ENCODE measurements at regions of chr17 and their contacts with region 1.

Region 1: GRCh38 chr17:40098846-40099618 is 1.4 kb downstream of the NR1D1 start:
- DNase-seq: peak; percentile 100
- H3K4me3 Mint-ChIP-seq: peak overlapping the region; percentile 95
- H3K27ac Mint-ChIP-seq: peak overlapping the region; percentile 94
- H3K4me1 Mint-ChIP-seq: peaks cover 31% of the 10 kb centered on the region
- H3K27me3 Mint-ChIP-seq: no peaks in the 10 kb centered on the region
- CTCF ChIP-seq: no peak

Region 2: DNA sequence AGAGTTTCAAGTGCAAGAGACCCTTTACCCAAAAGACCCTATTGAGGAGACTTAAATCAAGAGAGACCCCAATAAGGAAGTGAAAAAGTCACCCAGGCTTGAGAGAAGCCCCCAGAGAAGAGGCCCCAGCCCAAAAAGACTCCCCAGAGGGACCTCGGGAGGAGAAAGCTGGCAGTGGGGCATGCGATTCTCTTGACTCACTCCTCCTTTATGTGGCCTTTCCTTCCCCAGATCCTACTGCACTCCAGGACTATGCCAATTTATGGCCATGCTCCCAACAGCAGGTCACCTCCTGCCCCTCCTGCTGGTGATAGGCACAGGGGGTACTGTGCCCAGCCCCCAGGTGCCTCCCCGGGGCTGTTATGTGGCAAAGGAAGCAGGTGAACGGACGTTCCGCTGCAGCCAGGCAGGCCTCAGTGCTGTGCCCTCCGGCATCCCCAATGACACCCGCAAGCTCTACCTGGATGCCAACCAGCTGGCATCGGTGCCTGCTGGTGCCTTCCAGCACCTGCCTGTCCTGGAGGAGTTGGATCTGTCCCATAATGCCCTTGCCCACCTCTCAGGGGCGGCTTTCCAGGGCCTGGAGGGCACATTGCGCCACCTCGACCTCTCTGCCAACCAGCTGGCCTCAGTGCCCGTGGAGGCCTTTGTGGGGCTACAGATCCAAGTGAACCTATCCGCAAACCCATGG is 155.2 kb before region 1 on chr17:
- CTCF ChIA-PET with region 1: no interaction called
- POLR2A ChIA-PET with region 1: no interaction called
- intact Hi-C with region 1: no loop called
- DNase-seq: no peak
- H3K4me3 Mint-ChIP-seq: no peak overlapping the region
- H3K27ac Mint-ChIP-seq: no peak overlapping the region
- H3K4me1 Mint-ChIP-seq: no peaks in the 10 kb centered on the region
- H3K27me3 Mint-ChIP-seq: peaks cover 23% of the 10 kb centered on the region
- CTCF ChIP-seq: no peak

Region 3: DNA sequence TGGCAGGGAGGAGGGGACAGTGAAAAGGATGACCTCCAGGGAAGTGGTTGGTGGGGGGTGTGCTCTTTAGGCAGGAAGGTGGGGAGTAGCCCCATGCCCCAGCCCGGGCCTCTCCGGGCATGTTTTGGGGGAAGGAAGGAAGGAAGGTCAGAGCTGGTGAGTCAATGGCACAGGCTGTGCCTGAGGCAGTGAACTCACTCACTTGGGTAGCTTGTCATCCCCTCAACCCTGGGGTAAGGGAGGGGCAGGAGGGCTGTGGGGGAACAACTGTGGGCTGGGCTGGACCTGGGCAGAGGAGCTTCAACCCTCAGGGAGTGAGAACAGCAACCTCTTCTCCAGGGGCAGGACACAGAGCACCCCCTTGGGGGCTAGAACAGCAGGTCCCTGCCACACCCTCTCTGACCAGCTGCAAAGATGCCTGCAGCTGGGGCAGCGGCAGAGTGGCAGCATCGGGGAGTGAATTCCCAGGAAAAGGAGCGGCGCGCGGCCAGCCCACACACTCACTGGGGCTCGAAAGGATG is 77.5 kb before region 1 on chr17:
- CTCF ChIA-PET with region 1: interaction called, 3 read pairs
- POLR2A ChIA-PET with region 1: interaction called, 79 read pairs
- intact Hi-C with region 1: no loop called
- DNase-seq: peak; percentile 99
- H3K4me3 Mint-ChIP-seq: peak overlapping the region; percentile 47
- H3K27ac Mint-ChIP-seq: peak overlapping the region; percentile 96
- H3K4me1 Mint-ChIP-seq: peaks cover 74% of the 10 kb centered on the region
- H3K27me3 Mint-ChIP-seq: no peaks in the 10 kb centered on the region
- CTCF ChIP-seq: no peak

Region 4: GRCh38 chr17:40062329-40063186 is 36.5 kb before region 1 on chr17 and contains the start of gene THRA:
- CTCF ChIA-PET with region 1: interaction called, 18 read pairs
- POLR2A ChIA-PET with region 1: interaction called, 99 read pairs
- intact Hi-C with region 1: no loop called
- DNase-seq: peak; percentile 46
- H3K4me3 Mint-ChIP-seq: peak within 1 kb of the TSS; percentile 89
- H3K27ac Mint-ChIP-seq: peak within 1 kb of the TSS; percentile 39
- H3K4me1 Mint-ChIP-seq: peaks cover 33% of the 10 kb centered on the region
- H3K27me3 Mint-ChIP-seq: no peaks in the 10 kb centered on the region
- CTCF ChIP-seq: peak; percentile 22
- total RNA-seq, gene THRA: 5.5 and 6.4 TPM in 2 replicates

Region 5: GRCh38 chr17:40121181-40122135 is 22.4 kb after region 1 on chr17 and contains the start of gene MSL1:
- CTCF ChIA-PET with region 1: interaction called, 4 read pairs
- POLR2A ChIA-PET with region 1: interaction called, 340 read pairs
- intact Hi-C with region 1: no loop called
- DNase-seq: peak; percentile 81
- H3K4me3 Mint-ChIP-seq: peak within 1 kb of the TSS; percentile 99
- H3K27ac Mint-ChIP-seq: peak within 1 kb of the TSS; percentile 82
- H3K4me1 Mint-ChIP-seq: peaks cover 20% of the 10 kb centered on the region
- H3K27me3 Mint-ChIP-seq: no peaks in the 10 kb centered on the region
- CTCF ChIP-seq: no peak
- total RNA-seq, gene MSL1: 59.8 and 62.2 TPM in 2 replicates

Region 6: GRCh38 chr17:40177275-40177874 is 78.3 kb after region 1 on chr17 and contains the start of gene RAPGEFL1:
- CTCF ChIA-PET with region 1: interaction called, 4 read pairs
- POLR2A ChIA-PET with region 1: interaction called, 28 read pairs
- intact Hi-C with region 1: no loop called
- DNase-seq: peak; percentile 69
- H3K4me3 Mint-ChIP-seq: peak within 1 kb of the TSS; percentile 59
- H3K27ac Mint-ChIP-seq: peak within 1 kb of the TSS; percentile 92
- H3K4me1 Mint-ChIP-seq: peaks cover 29% of the 10 kb centered on the region
- H3K27me3 Mint-ChIP-seq: no peaks in the 10 kb centered on the region
- CTCF ChIP-seq: no peak
- total RNA-seq, gene RAPGEFL1: 4.9 and 5.6 TPM in 2 replicates

Region 7: DNA sequence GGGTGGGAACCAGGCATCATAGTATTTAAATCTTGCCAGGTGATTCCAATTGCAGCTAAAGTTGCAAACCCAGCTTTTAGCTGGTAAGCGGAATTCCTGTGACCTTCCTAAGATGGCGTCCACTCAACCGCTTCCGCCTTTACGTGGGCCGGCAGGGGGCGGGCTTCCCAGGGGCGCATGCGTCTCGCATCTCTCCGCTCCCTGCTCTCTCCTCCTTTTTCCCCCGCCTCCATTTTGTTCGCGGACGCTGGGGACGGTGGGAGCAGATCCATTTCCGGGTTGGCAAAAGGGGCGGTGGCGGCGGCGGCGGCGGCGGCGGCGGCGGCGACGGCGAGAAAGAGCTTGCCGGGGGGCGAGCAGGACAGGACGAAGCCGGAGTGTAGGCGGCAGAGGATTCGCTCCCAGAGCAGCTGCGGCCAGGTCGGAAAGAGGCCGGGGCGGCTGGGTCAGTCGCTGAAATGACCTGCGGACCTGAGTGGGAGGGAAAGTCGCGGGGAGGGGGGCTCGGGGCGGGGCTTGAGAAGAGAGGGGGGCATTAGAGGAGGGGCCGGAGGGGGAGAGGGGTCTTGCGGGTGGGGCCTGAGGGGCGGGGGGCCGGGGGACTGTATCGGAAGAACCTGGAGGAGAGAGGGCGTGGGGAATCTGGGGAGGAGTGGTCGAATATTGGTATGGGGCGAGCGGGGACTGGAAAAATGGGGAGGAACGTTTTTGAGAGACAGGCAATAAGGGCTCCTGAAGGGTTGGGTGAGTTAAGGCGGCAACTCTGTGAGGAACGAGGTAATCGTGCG is 120.2 kb after region 1 on chr17 and contains the start of gene WIPF2:
- CTCF ChIA-PET with region 1: interaction called, 3 read pairs
- POLR2A ChIA-PET with region 1: interaction called, 11 read pairs
- intact Hi-C with region 1: no loop called
- DNase-seq: peak; percentile 97
- H3K4me3 Mint-ChIP-seq: peak within 1 kb of the TSS; percentile 90
- H3K27ac Mint-ChIP-seq: peak within 1 kb of the TSS; percentile 98
- H3K4me1 Mint-ChIP-seq: peaks cover 16% of the 10 kb centered on the region
- H3K27me3 Mint-ChIP-seq: no peaks in the 10 kb centered on the region
- CTCF ChIP-seq: peak; percentile 68
- total RNA-seq, gene WIPF2: 31.9 and 32.8 TPM in 2 replicates

Region 8: DNA sequence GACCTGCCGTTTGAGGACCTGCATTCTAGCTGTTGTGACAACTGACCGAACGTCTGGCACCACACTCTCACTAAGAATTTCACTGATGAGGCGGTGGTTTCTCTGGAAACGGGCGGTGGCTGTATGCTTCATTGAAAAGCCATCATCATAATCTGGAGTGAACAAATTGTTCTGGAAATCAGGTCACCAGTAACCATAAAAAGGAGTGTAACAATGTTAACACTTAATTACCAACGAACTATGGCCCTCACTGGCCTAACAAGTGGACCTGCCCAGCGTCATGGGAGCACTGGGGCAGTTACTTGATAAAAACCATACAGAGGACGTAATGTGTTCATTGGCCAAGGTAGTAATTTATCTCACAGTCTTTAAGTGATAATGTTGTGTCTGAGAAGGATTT is 533.2 kb after region 1 on chr17:
- CTCF ChIA-PET with region 1: no interaction called
- POLR2A ChIA-PET with region 1: no interaction called
- intact Hi-C with region 1: no loop called
- DNase-seq: no peak
- H3K4me3 Mint-ChIP-seq: no peak overlapping the region
- H3K27ac Mint-ChIP-seq: no peak overlapping the region
- H3K4me1 Mint-ChIP-seq: no peaks in the 10 kb centered on the region
- H3K27me3 Mint-ChIP-seq: no peaks in the 10 kb centered on the region
- CTCF ChIP-seq: no peak

Region 9: DNA sequence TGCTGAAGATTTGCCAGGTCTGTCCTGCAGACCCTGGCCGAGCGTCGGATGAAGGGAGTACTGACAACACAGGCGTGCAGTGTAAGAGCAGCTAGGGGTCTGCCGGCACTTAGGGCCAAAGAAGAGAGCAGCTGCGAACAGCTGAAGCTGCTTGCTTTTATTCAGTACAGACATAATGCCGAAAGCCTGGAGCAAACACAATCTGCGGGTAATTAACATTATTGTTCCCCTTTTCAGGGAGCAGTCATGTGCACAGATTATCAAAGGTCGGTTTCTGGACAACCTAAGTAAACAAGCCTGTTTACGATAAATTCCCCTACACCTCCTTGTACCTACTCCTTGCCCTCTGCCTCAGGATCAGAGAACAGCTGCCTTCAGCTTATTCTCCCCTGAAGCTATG is 850.4 kb after region 1 on chr17:
- CTCF ChIA-PET with region 1: no interaction called
- POLR2A ChIA-PET with region 1: no interaction called
- intact Hi-C with region 1: no loop called
- DNase-seq: no peak
- H3K4me3 Mint-ChIP-seq: no peak overlapping the region
- H3K27ac Mint-ChIP-seq: no peak overlapping the region
- H3K4me1 Mint-ChIP-seq: peaks cover 16% of the 10 kb centered on the region
- H3K27me3 Mint-ChIP-seq: peaks cover 14% of the 10 kb centered on the region
- CTCF ChIP-seq: no peak